HepG2 (cell line): ENCODE measurements at regions of chr15 and their contacts with region 1.

Region 1: GRCh38 chr15:98779463-98780071 is 131.2 kb downstream of the IGF1R start:
- DNase-seq: peak; percentile 64
- ATAC-seq: peak; percentile 83
- H3K4me3 ChIP-seq: no peak overlapping the region
- H3K27ac ChIP-seq: no peak overlapping the region
- H3K4me1 ChIP-seq: peaks cover 66% of the 10 kb centered on the region
- H3K27me3 ChIP-seq: no peaks in the 10 kb centered on the region
- CTCF ChIP-seq: peak; percentile 95
- EP300 ChIP-seq: no peak
- POLR2A ChIP-seq: no peak
- RAD21 ChIP-seq: peak; percentile 82

Region 2: GRCh38 chr15:98518823-98519561 is 260.6 kb before region 1 on chr15:
- CTCF ChIA-PET with region 1: interaction called, 3 read pairs
- POLR2A ChIA-PET with region 1: no interaction called
- in situ Hi-C with region 1: no loop called
- intact Hi-C with region 1: loop called (anchors 5 kb)
- DNase-seq: peak; percentile 67
- ATAC-seq: peak; percentile 82
- H3K4me3 ChIP-seq: no peak overlapping the region
- H3K27ac ChIP-seq: no peak overlapping the region
- H3K4me1 ChIP-seq: peaks cover 32% of the 10 kb centered on the region
- H3K27me3 ChIP-seq: peaks cover 0 to 20% of the 10 kb centered on the region in 2 experiments; a peak in 3 of 5 replicates
- CTCF ChIP-seq: peak; percentile 88
- EP300 ChIP-seq: no peak
- POLR2A ChIP-seq: no peak
- RAD21 ChIP-seq: peak; percentile 73

Region 3: GRCh38 chr15:98671060-98672008 is 108.2 kb before region 1 on chr15:
- CTCF ChIA-PET with region 1: no interaction called
- POLR2A ChIA-PET with region 1: no interaction called
- in situ Hi-C with region 1: no loop called
- intact Hi-C with region 1: loop called (anchors 2 kb)
- DNase-seq: peak; percentile 95
- ATAC-seq: peak; percentile 82
- H3K4me3 ChIP-seq: peak overlapping the region; percentile 1 to 47 (median 32); a peak in 2 of 6 replicates
- H3K27ac ChIP-seq: peak overlapping the region; percentile 92
- H3K4me1 ChIP-seq: peaks cover 98% of the 10 kb centered on the region
- H3K27me3 ChIP-seq: no peaks in the 10 kb centered on the region
- CTCF ChIP-seq: no peak
- EP300 ChIP-seq: peak; percentile 66 to 86; a peak in 3 of 4 replicates
- POLR2A ChIP-seq: no peak
- RAD21 ChIP-seq: no peak

Region 4: DNA sequence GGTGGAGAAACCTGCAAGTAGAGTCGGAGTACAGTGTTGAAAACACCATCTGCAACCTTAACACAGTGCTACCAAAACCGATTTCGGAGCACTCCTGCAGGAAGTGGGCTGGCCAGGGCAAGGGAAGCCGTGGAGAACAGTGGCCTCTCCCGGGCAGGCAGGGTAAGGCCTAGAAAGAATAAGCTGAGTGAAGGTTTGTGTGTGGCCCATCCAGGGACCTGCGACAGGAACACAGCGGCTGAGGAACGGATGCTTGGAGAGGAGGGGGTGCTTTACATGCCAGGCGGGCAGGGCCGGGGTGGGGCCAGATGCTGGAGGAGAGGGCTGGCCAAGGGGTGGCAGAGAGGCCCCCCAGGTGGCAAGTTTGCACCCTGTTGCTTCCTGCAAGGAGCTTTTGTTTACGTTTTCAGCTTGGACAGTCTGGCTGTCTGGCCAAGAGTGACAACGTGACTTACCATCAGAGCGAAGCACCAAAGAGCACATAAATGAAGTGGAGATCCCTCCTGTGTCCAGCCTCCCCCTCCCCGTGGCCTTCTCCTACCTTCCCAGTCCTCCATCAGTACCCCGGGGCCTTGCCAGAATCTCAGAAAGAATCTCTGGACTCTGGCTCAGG is 71.5 kb after region 1 on chr15:
- CTCF ChIA-PET with region 1: interaction called, 3 read pairs
- POLR2A ChIA-PET with region 1: interaction called, 3 read pairs
- in situ Hi-C with region 1: no loop called
- intact Hi-C with region 1: loop called (anchors 1 kb)
- DNase-seq: peak; percentile 61
- ATAC-seq: peak; percentile 92
- H3K4me3 ChIP-seq: peak overlapping the region in 2 of 3 experiments; percentile 69 to 74; a peak in 2 of 6 replicates
- H3K27ac ChIP-seq: no peak overlapping the region
- H3K4me1 ChIP-seq: peaks cover 33% of the 10 kb centered on the region
- H3K27me3 ChIP-seq: no peaks in the 10 kb centered on the region
- CTCF ChIP-seq: peak; percentile 93
- EP300 ChIP-seq: no peak
- POLR2A ChIP-seq: no peak
- RAD21 ChIP-seq: peak; percentile 82

Region 5: GRCh38 chr15:99076552-99077308 is 297.2 kb after region 1 on chr15:
- CTCF ChIA-PET with region 1: no interaction called
- POLR2A ChIA-PET with region 1: no interaction called
- in situ Hi-C with region 1: no loop called
- intact Hi-C with region 1: loop called (anchors 10 kb)
- DNase-seq: peak; percentile 67
- ATAC-seq: peak; percentile 86
- H3K4me3 ChIP-seq: peak overlapping the region in 2 of 3 experiments; percentile 27 to 31; a peak in 3 of 6 replicates
- H3K27ac ChIP-seq: no peak overlapping the region
- H3K4me1 ChIP-seq: peaks cover 9% of the 10 kb centered on the region
- H3K27me3 ChIP-seq: peaks cover 0 to 7% of the 10 kb centered on the region in 2 experiments; a peak in 2 of 5 replicates
- CTCF ChIP-seq: peak; percentile 91
- EP300 ChIP-seq: no peak
- POLR2A ChIP-seq: no peak
- RAD21 ChIP-seq: peak; percentile 77